ENCODE measurements at regions of chr2 and their contacts with region 1.

Region 1: DNA sequence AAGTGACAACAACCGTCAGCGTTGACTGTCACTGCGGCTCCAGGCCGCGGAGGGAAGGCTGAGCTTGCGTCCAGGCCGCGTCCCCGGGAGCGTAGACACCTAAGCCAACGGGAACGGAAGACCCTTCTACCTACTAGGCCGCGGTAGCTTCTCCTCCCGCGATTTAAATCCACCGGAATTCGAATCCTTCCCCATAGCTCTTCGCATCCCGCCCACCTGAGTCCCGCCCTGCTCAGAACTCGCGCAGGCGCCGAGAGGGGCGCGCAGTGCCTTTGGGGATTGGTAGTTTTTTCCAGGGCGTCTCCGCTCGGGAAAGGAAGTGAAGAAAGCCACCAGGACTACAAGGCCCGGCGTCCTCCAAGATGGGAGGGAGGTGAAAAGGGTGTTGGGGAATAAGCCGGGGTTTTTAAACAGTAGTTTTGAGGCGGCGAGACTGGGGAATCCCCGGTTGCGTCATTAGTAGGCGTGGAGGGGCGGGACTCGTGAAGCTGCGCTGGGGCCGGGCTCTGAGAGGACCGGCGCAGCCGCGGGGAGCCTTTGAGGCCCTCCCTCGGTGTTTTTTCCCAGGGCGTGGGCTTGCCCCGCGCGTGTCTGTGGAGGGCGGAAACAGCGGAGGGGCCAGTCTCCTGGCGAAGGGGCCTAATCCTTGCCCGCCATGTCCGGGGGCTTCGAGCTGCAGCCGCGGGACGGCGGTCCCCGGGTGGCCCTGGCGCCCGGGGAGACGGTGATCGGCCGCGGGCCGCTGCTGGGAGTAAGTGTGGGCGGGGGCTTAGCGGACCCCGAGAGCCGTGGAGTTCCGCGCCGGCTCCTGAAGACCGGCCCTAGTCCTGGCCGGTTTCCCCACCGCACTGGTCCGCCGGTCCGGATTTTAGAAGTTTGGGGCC is at the starts of genes APLF and FBXO48:
- DNase-seq: peak; percentile 99 to 100 (median 99)
- H3K4me3 ChIP-seq: peak within 1 kb of the TSS; percentile 79 to 98 (median 96)
- H3K27ac ChIP-seq: peak within 1 kb of the TSS; percentile 91 to 96
- H3K4me1 ChIP-seq: peaks cover 2 to 29% (median 18%) of the 10 kb centered on the region in 4 experiments
- H3K27me3 ChIP-seq: no peaks in the 10 kb centered on the region

Region 2: GRCh38 chr2:68157402-68158133 is 309.8 kb before region 1 on chr2 and contains the start of gene PNO1:
- CTCF ChIA-PET with region 1: no interaction called
- POLR2A ChIA-PET with region 1: no interaction called
- DNase-seq: peak; percentile 97 to 98 (median 98)
- H3K4me3 ChIP-seq: peak within 1 kb of the TSS; percentile 80 to 98 (median 95)
- H3K27ac ChIP-seq: peak within 1 kb of the TSS; percentile 99
- H3K4me1 ChIP-seq: peaks cover 21 to 41% (median 32%) of the 10 kb centered on the region in 4 experiments
- H3K27me3 ChIP-seq: no peaks in the 10 kb centered on the region

Region 3: GRCh38 chr2:68452168-68452900 is 15.0 kb before region 1 on chr2:
- CTCF ChIA-PET with region 1: interaction called, 13 read pairs
- POLR2A ChIA-PET with region 1: interaction called, 3 read pairs
- DNase-seq: peak in 2 of 3 donors; percentile 63 to 72
- H3K4me3 ChIP-seq: no peak overlapping the region
- H3K27ac ChIP-seq: no peak overlapping the region
- H3K4me1 ChIP-seq: peaks cover 0 to 6% (median 0%) of the 10 kb centered on the region in 4 experiments
- H3K27me3 ChIP-seq: no peaks in the 10 kb centered on the region

Region 4: GRCh38 chr2:68487773-68488355 is 20.5 kb after region 1 on chr2:
- CTCF ChIA-PET with region 1: interaction called, 18 read pairs
- POLR2A ChIA-PET with region 1: no interaction called
- DNase-seq: peak; percentile 32 to 58 (median 52)
- H3K4me3 ChIP-seq: no peak overlapping the region
- H3K27ac ChIP-seq: no peak overlapping the region
- H3K4me1 ChIP-seq: peaks cover 0 to 7% (median 2%) of the 10 kb centered on the region in 4 experiments
- H3K27me3 ChIP-seq: no peaks in the 10 kb centered on the region

Region 5: DNA sequence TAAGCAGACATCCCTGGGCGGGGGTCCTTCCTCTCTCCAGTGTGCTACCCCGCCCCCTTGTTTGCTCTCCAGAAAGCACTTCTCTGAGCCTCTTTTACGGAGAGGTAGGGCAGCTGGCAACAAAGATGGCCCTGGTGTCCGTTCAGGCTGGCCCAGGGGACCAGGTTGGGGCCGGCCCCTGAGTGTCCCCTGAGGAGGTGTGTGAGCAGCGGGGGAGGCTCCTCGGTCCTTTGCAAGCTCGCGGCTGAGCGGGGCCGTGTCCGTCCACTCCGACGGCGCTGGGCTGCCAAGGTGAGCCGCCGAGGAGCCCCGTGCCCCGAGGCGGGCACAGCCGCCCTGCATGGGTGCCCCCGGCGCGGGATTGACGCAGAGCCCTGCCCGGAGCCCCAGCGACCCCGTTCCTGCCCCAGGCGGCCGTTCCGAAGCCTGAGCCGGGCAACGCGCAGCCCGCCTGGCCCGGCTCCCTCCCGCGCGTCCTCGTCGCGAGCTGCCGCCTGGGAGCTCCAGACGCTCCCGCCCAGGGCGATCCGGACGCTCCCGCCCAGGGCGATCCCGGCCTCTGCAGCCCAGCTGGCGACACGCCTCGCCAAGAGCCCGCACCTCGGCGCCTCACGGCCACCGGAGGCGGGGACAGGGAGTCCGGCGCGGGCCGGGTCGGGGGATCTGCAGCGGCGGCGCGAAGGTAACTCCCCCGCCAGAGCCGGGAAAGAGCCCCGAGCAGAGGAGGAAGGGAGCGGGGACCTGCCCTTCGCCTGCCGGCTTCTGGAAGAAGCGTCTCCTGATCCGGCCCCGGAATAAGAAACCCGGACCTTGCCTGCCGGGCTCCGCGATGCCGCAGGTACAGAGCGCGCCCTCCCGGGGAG is 175.9 kb after region 1 on chr2 and contains the start of gene PROKR1:
- CTCF ChIA-PET with region 1: interaction called, 14 read pairs
- POLR2A ChIA-PET with region 1: no interaction called
- DNase-seq: peak in 1 of 3 donors; percentile 36
- H3K4me3 ChIP-seq: peak within 1 kb of the TSS; percentile 19 to 72 (median 56)
- H3K27ac ChIP-seq: no peak within 1 kb of the TSS
- H3K4me1 ChIP-seq: peaks cover 0 to 17% (median 14%) of the 10 kb centered on the region in 4 experiments
- H3K27me3 ChIP-seq: peaks cover 8 to 43% (median 25%) of the 10 kb centered on the region in 5 experiments

Region 6: DNA sequence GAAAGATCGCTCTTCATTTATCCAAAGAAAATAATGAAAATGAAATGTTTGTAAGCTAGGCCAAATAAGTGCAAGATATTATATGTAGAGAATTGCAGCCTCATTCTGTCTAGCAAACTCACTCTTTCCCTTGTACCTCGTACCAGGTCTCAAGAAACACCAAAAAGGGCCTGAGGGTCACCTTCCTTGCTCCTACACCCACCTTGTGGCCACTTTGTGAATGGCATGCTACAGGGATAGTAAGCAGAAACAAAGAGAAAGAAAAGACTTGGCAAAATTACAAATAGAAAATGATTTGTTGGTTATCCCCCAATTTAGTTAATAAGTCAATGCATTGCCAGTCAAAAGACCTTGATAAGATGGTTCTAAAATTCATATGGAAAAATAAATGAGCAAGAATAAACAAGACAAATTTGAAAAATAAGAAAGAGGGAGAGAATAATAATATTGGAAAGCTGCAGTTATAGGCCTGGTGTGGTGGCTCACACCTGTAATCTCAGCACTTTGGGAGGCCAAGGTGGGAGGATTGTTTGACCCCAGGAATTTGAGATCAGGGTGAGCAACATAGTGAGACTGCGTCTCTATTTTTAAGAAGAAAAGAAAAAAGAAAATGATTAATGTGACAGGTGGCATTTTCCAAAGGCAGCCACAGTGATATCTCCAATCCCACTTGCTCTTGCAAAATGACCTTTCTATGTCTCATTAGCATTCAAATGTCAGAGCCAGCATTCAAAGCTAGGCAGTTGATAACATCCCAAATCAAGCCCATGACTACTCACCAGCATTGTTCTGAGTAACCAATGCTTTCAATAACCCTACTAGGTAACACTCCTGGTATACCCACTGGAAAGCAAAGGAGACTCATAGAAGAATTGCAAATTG is 442.7 kb after region 1 on chr2:
- CTCF ChIA-PET with region 1: interaction called, 14 read pairs
- POLR2A ChIA-PET with region 1: no interaction called
- DNase-seq: peak; percentile 85 to 91 (median 88)
- H3K4me3 ChIP-seq: no peak overlapping the region
- H3K27ac ChIP-seq: no peak overlapping the region
- H3K4me1 ChIP-seq: peaks cover 11 to 74% (median 65%) of the 10 kb centered on the region in 4 experiments
- H3K27me3 ChIP-seq: no peaks in the 10 kb centered on the region